ENCODE measurements at regions of chr5 and their contacts with region 1.

Region 1: GRCh38 chr5:92041911-92042660 is 659.0 kb upstream of the ARRDC3 start:
- DNase-seq: no peak
- ATAC-seq: no peak

Region 2: DNA sequence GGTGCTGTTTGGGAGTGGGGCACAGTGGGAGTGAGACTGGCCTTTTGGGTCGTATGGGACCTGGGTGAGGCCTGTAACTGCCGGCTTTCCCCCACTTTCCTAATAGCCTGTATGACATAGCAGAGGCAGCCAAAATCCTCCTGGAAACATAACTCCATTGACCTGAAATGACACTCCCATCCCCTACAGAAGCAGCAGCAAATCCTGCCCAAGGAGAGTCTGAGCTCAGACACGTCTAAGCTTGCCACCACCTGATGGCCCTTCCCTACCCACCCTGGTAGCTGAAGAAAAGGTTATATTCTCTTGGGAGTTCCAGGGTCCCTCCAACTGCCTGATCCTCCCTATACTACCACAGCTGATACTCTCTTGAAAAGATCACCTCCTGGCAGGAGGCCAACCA is 479.2 kb before region 1 on chr5:
- intact Hi-C with region 1: no loop called
- DNase-seq: no peak
- ATAC-seq: no peak

Region 3: DNA sequence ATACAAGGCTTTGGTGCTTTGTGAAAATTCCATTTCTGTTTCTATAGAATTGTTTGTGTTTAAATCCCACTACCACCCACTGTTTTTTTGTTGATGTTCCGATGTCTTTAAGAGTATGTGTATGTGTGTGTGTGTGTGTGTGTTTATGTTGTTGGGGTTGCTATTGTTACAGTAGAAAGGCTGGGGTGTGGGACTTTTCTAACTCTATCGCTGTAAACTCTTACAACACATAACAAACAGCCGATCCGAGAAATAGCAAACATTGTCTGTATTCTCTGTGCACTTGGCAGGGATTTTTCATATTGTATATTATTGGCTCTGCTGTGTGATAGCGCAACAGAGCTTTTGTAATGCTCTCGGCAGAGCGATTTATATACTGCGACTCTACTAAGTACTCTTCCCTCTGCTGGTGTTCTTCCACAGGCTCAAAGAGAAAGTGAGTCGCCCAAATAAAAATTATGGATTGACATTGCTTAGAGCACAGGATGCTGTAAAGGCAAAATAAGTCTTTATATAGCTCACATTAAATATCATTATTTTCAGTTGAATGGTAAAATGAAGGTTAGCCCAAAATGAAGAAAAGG is 166.8 kb before region 1 on chr5:
- intact Hi-C with region 1: no loop called
- DNase-seq: no peak
- ATAC-seq: no peak

Region 4: GRCh38 chr5:92185543-92185942 is 143.5 kb after region 1 on chr5:
- intact Hi-C with region 1: no loop called
- DNase-seq: no peak
- ATAC-seq: no peak

Region 5: DNA sequence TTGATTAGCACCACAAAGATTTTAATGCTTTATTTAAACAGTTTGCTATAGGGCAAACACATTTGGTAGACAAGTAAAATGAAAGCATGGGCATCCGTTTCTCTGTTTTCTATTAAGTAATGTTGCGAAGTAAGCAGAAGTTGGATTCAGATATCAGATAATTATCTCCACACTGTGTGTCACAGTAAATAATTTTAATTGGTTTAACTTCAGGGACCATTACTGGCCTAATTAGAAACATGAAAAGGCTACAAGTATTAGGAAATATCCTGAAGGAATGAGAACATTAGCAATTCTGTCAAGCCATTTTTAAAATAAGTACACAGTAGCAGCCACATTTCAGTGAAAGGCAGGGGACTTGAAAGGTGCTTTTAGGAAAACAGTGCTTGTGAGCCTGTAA is 563.5 kb after region 1 on chr5:
- intact Hi-C with region 1: loop called (anchors 5 kb)
- DNase-seq: no peak
- ATAC-seq: no peak